HEK293 (cell line): ENCODE measurements at regions of chr6 and their contacts with region 1.

Region 1: GRCh38 chr6:155256122-155256795 is 7.6 kb upstream of the CLDN20 start:
- H3K4me3 ChIP-seq: no peak overlapping the region
- H3K27ac ChIP-seq: no peak overlapping the region
- H3K4me1 ChIP-seq: no peaks in the 10 kb centered on the region
- CTCF ChIP-seq: no peak

Region 2: GRCh38 chr6:155267411-155267810 is 11.2 kb after region 1 on chr6:
- CTCF ChIA-PET with region 1: interaction called, 19 read pairs
- POLR2A ChIA-PET with region 1: no interaction called
- H3K4me3 ChIP-seq: no peak overlapping the region
- H3K27ac ChIP-seq: no peak overlapping the region
- H3K4me1 ChIP-seq: no peaks in the 10 kb centered on the region
- CTCF ChIP-seq: no peak

Region 3: GRCh38 chr6:155782320-155782731 is 526.1 kb after region 1 on chr6:
- CTCF ChIA-PET with region 1: no interaction called
- POLR2A ChIA-PET with region 1: no interaction called
- H3K4me3 ChIP-seq: no peak overlapping the region
- H3K27ac ChIP-seq: peak overlapping the region; percentile 13; the same call in 1 of the 2 replicates
- H3K4me1 ChIP-seq: no peaks in the 10 kb centered on the region
- CTCF ChIP-seq: no peak